Dendritic cell treated with granulocyte-macrophage colony-stimulating factor and Interleukin-4, amounts not matched to agents 40 ng/mL and 50 ng/mL, for 4 days (primary cell): ENCODE measurements at regions of chr9 and their contacts with region 1.

Region 1: GRCh38 chr9:136944519-136945279 is at the starts of genes C8G and FBXW5:
- H3K4me3 Mint-ChIP-seq: peak within 1 kb of the TSS; percentile 77
- H3K27ac Mint-ChIP-seq: peak within 1 kb of the TSS; percentile 69
- H3K4me1 Mint-ChIP-seq: peaks cover 43% of the 10 kb centered on the region
- H3K27me3 Mint-ChIP-seq: no peaks in the 10 kb centered on the region

Region 2: GRCh38 chr9:136118320-136119060 is 826.2 kb before region 1 on chr9 and contains the start of gene TMEM250:
- intact Hi-C with region 1: no loop called
- H3K4me3 Mint-ChIP-seq: peak within 1 kb of the TSS; percentile 76
- H3K27ac Mint-ChIP-seq: peak within 1 kb of the TSS; percentile 82
- H3K4me1 Mint-ChIP-seq: peaks cover 49% of the 10 kb centered on the region
- H3K27me3 Mint-ChIP-seq: peaks cover 5% of the 10 kb centered on the region

Region 3: GRCh38 chr9:136865735-136866103 is 79.0 kb before region 1 on chr9:
- intact Hi-C with region 1: no loop called
- H3K4me3 Mint-ChIP-seq: peak overlapping the region; percentile 85
- H3K27ac Mint-ChIP-seq: peak overlapping the region; percentile 85
- H3K4me1 Mint-ChIP-seq: peaks cover 16% of the 10 kb centered on the region
- H3K27me3 Mint-ChIP-seq: no peaks in the 10 kb centered on the region

Region 4: DNA sequence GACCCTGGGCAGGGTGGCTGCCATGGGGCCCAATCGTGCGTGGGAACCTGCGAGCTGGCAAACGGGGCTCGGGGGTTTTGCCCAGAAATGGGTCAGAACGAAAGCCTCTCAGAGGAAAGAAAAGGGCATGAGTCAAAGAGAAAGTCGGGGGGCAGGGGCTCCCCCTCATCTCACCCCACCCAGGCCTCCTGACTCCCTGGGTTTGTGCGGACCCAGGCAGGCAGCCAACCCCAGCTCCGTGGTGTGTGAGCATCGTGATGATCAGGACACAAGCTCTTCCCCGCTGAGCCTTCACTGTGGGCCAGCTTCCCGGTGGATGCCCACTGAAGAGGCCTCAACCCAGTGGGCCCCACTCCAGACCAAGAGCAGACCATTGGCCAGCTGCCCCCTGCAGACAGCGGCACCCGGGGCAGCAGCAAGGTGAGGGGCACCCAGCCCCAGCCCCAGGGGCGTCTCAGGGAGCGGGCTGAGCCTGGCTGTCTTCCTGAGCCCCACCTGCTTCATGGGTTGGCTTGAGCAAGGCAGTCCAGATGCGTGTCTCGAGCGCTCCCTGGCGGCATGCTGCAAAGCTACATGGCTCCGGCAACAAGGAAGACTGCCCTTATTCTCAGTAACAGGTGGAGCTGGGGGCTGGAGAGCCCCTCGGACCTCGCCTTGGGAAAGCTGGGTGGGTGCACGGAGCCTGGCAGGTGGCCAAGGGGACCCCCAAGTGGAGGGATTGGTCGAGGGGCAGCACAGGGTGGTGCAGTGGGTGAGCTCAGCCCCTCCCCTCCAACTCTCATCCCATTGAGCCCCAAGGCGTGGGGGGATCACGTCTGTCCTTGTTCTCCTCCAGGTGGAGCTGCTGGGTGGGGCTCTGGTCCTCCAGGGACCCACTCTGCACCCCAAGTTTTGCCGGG is 90.4 kb after region 1 on chr9:
- intact Hi-C with region 1: loop called (anchors 1 kb)
- H3K4me3 Mint-ChIP-seq: peak overlapping the region; percentile 80
- H3K27ac Mint-ChIP-seq: peak overlapping the region; percentile 90
- H3K4me1 Mint-ChIP-seq: peaks cover 75% of the 10 kb centered on the region
- H3K27me3 Mint-ChIP-seq: peaks cover 2% of the 10 kb centered on the region

Region 5: GRCh38 chr9:137046098-137046787 is 101.5 kb after region 1 on chr9 and contains the start of gene NPDC1:
- intact Hi-C with region 1: no loop called
- H3K4me3 Mint-ChIP-seq: peak within 1 kb of the TSS; percentile 65
- H3K27ac Mint-ChIP-seq: no peak within 1 kb of the TSS
- H3K4me1 Mint-ChIP-seq: peaks cover 21% of the 10 kb centered on the region
- H3K27me3 Mint-ChIP-seq: peaks cover 88% of the 10 kb centered on the region